Endothelial cell of umbilical vein (primary cell): ENCODE measurements at regions of chr12 and their contacts with region 1.

Region 1: GRCh38 chr12:55659486-55660385 is 23.0 kb downstream of the OR10P1 start:
- DNase-seq: peak; percentile 12
- H3K4me3 ChIP-seq: no peak overlapping the region
- H3K27ac ChIP-seq: no peak overlapping the region
- H3K4me1 ChIP-seq: no peaks in the 10 kb centered on the region
- H3K27me3 ChIP-seq: peaks cover 11 to 18% of the 10 kb centered on the region in 2 experiments
- CTCF ChIP-seq: peak; percentile 31 to 54
- POLR2A ChIP-seq: no peak

Region 2: GRCh38 chr12:55188974-55189556 is 470.7 kb before region 1 on chr12:
- CTCF ChIA-PET with region 1: interaction called, 27 read pairs
- POLR2A ChIA-PET with region 1: no interaction called
- dilution Hi-C with region 1: no loop called
- intact Hi-C with region 1: loop called (anchors 1 kb)
- DNase-seq: peak; percentile 87
- H3K4me3 ChIP-seq: no peak overlapping the region
- H3K27ac ChIP-seq: no peak overlapping the region
- H3K4me1 ChIP-seq: no peaks in the 10 kb centered on the region
- H3K27me3 ChIP-seq: peaks cover 0 to 5% of the 10 kb centered on the region in 2 experiments
- CTCF ChIP-seq: peak; percentile 43 to 46
- POLR2A ChIP-seq: no peak

Region 3: DNA sequence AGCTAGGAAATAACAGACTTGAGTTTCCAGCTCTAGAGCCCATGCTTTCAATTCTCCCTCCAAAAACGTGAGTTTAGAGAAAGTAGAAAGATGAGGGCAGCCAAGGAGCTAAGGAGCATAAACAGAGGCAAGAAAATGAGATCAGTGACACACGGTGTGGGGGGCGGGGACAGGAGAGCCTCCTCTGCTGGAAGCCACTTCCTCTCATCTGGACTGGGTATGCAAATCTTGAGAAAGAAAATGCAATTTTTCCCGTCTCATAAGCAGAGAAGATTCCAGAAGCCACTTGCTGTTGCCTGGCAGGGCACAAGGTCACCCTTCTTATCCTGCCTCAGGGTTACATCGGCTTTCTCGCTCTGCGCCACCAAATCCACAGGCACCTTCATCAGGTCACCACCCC is 17.1 kb before region 1 on chr12:
- CTCF ChIA-PET with region 1: interaction called, 82 read pairs
- POLR2A ChIA-PET with region 1: no interaction called
- dilution Hi-C with region 1: no loop called
- intact Hi-C with region 1: loop called (anchors 1 kb)
- DNase-seq: no peak
- H3K4me3 ChIP-seq: no peak overlapping the region
- H3K27ac ChIP-seq: no peak overlapping the region
- H3K4me1 ChIP-seq: no peaks in the 10 kb centered on the region
- H3K27me3 ChIP-seq: peaks cover 3 to 6% of the 10 kb centered on the region in 2 experiments
- CTCF ChIP-seq: no peak
- POLR2A ChIP-seq: no peak

Region 4: GRCh38 chr12:55681142-55682077 is 21.7 kb after region 1 on chr12:
- CTCF ChIA-PET with region 1: interaction called, 10 read pairs
- POLR2A ChIA-PET with region 1: no interaction called
- dilution Hi-C with region 1: no loop called
- intact Hi-C with region 1: no loop called
- DNase-seq: peak; percentile 44
- H3K4me3 ChIP-seq: no peak overlapping the region
- H3K27ac ChIP-seq: no peak overlapping the region
- H3K4me1 ChIP-seq: no peaks in the 10 kb centered on the region
- H3K27me3 ChIP-seq: peaks cover 0 to 5% of the 10 kb centered on the region in 2 experiments
- CTCF ChIP-seq: peak; percentile 14 to 43
- POLR2A ChIP-seq: no peak

Region 5: DNA sequence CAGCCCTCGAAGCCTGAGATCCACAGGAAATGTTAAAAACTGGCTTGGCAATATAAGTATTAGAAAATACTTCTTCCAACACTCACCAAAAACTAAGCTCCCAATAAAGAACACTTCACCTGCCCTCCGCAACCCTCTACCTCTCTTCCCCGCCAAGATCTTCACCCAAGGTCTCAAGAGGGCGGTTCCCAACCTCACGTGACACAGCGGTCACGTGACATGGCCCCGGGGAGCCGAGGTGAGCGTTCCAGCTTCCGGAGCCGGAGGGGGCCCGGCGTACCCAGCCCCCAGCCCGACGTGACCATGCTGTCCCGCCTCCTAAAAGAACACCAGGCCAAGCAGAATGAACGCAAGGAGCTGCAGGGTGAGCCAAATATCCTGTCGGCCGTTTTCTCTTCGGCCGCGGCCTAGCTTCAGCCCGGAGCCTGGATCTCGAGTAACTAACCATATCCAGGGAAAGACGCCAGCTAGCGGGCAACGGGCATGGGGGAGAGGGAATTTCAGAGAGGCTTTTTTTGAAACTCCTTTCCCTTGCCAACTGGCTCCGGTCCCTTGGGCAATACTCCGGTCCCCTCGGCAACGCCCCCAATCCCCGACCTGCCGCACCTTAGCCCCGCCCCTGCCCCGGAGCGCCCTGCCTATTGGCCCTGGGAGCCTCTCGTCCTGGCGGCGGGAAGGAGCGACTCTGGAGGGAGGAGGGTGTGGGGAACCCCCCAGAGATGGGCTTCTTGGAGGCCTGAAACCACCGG is 56.3 kb after region 1 on chr12 and contains the start of gene BLOC1S1:
- CTCF ChIA-PET with region 1: interaction called, 43 read pairs
- POLR2A ChIA-PET with region 1: no interaction called
- dilution Hi-C with region 1: no loop called
- intact Hi-C with region 1: loop called (anchors 1 kb)
- DNase-seq: peak; percentile 84
- H3K4me3 ChIP-seq: peak within 1 kb of the TSS; percentile 66 to 94 (median 82)
- H3K27ac ChIP-seq: peak within 1 kb of the TSS; percentile 83
- H3K4me1 ChIP-seq: peaks cover 24% of the 10 kb centered on the region
- H3K27me3 ChIP-seq: peaks cover 11 to 17% of the 10 kb centered on the region in 2 experiments
- CTCF ChIP-seq: no peak
- POLR2A ChIP-seq: no peak
- total RNA-seq, gene BLOC1S1: 84.1 and 85.6 TPM in 2 replicates